ENCODE measurements at regions of chr9 and their contacts with region 1.

Region 1: GRCh38 chr9:9133526-9133925 is 1333.9 kb upstream of the DMAC1 start:
- DNase-seq: no peak
- H3K4me3 ChIP-seq: peak overlapping the region in 9 of 59 donors; percentile 1 to 22 (median 10)
- H3K27ac ChIP-seq: peak overlapping the region in 57 of 59 donors; percentile 25 to 93 (median 79)
- H3K27me3 ChIP-seq: no peaks in the 10 kb centered on the region
- CTCF ChIP-seq: peak in 1 of 56 donors; percentile 8

Region 2: GRCh38 chr9:8736805-8737204 is 396.7 kb before region 1 on chr9:
- intact Hi-C with region 1: no loop called
- DNase-seq: peak in 1 of 10 donors; percentile 56
- H3K4me3 ChIP-seq: peak overlapping the region in 1 of 59 donors; percentile 24
- H3K27ac ChIP-seq: peak overlapping the region in 31 of 59 donors; percentile 2 to 64 (median 35)
- H3K27me3 ChIP-seq: no peaks in the 10 kb centered on the region
- CTCF ChIP-seq: no peak

Region 3: DNA sequence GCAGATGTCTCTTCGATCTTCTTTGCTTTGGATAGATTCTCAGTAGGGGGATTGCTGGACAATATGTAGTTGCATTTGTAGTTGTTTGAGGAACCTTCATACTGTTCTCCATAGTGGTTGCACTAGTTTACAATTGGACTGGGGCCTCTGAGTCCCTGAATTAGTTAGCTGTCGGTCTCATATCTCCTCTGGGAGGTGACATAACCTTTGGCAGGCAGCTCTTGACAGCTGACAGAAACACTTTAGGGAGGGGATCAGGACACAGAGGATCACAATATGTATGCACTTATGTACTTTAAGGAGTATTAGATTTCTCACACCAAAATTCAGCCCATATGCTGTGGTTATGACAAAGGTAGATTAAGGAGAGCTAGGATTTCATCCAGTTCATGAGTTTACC is 54.1 kb before region 1 on chr9:
- intact Hi-C with region 1: loop called in 1 of 2 experiments (anchors 10 kb)
- DNase-seq: no peak
- H3K4me3 ChIP-seq: no peak overlapping the region
- H3K27ac ChIP-seq: no peak overlapping the region
- H3K27me3 ChIP-seq: no peaks in the 10 kb centered on the region
- CTCF ChIP-seq: no peak

Region 4: DNA sequence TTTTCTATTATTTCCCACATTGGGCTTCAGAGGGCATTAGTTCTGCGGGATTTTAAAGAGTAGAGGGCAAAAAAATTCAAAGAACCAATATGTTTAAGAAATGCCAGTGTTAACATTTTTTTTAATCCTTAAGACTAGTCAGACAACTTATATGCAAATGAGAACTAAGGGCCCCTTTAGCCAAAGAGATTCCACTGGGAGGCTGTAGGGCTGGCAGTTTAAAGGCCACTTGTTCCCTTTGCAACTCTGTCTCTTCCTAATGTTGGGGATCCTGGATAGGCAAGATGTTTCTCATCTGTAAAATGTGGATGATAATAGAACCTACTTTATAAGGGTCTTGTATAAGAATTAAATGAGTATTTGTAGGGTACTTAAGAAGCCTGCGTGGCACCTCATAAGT is 83.4 kb after region 1 on chr9:
- intact Hi-C with region 1: no loop called
- DNase-seq: no peak
- H3K4me3 ChIP-seq: no peak overlapping the region
- H3K27ac ChIP-seq: no peak overlapping the region
- H3K27me3 ChIP-seq: no peaks in the 10 kb centered on the region
- CTCF ChIP-seq: no peak

Region 5: GRCh38 chr9:9681362-9681761 is 547.8 kb after region 1 on chr9:
- intact Hi-C with region 1: no loop called
- DNase-seq: no peak
- H3K4me3 ChIP-seq: no peak overlapping the region
- H3K27ac ChIP-seq: no peak overlapping the region
- H3K27me3 ChIP-seq: no peaks in the 10 kb centered on the region
- CTCF ChIP-seq: no peak

Measured in dorsolateral prefrontal cortex (tissue), 120 donors.